CD4-positive, alpha-beta T cell (primary cell): ENCODE measurements at regions of chr17 and their contacts with region 1.

Region 1: DNA sequence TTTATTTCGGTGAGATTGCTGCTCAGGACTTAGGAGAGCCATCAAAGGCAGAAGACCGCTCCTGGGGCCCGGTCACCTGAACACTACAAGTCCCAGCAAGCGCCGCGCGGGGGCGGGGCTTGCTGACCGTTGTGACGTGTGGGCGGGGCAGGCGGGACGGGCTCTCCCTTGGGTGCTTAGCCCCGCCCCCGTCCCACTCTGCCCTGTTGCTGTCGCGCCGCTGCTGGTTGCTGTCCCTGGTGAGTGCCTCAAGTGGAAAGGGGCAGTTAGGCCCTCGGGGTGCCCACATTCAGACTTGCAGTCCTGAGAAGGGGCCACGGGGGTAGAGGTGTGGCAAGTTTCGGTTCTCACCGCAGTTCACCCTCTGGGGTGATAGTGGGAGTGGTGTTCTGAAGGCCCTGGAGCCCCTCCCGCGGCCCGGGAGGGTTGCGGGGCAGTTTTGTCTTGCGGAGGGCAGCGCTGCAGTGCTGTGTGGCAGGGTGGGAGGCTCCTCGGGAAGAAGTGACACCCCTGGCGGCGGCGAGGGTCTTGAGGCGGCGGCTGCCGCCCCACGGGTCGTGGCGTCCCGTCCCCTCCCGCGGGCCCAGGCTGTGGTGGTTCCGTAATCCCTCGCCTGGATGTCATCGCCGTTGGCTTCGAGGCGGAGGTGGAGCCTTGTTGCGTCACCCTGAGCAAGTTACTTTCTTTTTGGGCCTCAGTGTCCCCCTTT is at the start of gene CALCOCO2:
- DNase-seq: peak; percentile 66 to 95 (median 84)
- ATAC-seq: peak; percentile 84
- H3K4me3 ChIP-seq: peak within 1 kb of the TSS; percentile 98
- H3K4me3 Mint-ChIP-seq: peak within 1 kb of the TSS; percentile 99
- H3K27ac ChIP-seq: peak within 1 kb of the TSS; percentile 90 to 96
- H3K27ac Mint-ChIP-seq: peak within 1 kb of the TSS; percentile 97
- H3K4me1 ChIP-seq: peaks cover 45% of the 10 kb centered on the region
- H3K4me1 Mint-ChIP-seq: peaks cover 51% of the 10 kb centered on the region
- H3K27me3 ChIP-seq: no peaks in the 10 kb centered on the region
- H3K27me3 Mint-ChIP-seq: peaks cover under 1% of the 10 kb centered on the region
- CTCF ChIP-seq: no peak
- total RNA-seq, gene CALCOCO2: 140 to 142 TPM

Region 2: GRCh38 chr17:48787828-48788227 is 43.2 kb before region 1 on chr17:
- CTCF ChIA-PET with region 1: no interaction called
- POLR2A ChIA-PET with region 1: no interaction called
- intact Hi-C with region 1: no loop called
- DNase-seq: no peak
- ATAC-seq: no peak
- H3K4me3 ChIP-seq: no peak overlapping the region
- H3K4me3 Mint-ChIP-seq: no peak overlapping the region
- H3K27ac ChIP-seq: no peak overlapping the region
- H3K27ac Mint-ChIP-seq: no peak overlapping the region
- H3K4me1 ChIP-seq: peaks cover 6% of the 10 kb centered on the region
- H3K4me1 Mint-ChIP-seq: no peaks in the 10 kb centered on the region
- H3K27me3 ChIP-seq: peaks cover 9 to 18% of the 10 kb centered on the region in 2 experiments
- H3K27me3 Mint-ChIP-seq: peaks cover 48% of the 10 kb centered on the region
- CTCF ChIP-seq: no peak

Region 3: GRCh38 chr17:48816774-48817590 is 14.0 kb before region 1 on chr17 and contains the start of gene TTLL6:
- CTCF ChIA-PET with region 1: interaction called, 5 read pairs
- POLR2A ChIA-PET with region 1: interaction called, 5 read pairs
- intact Hi-C with region 1: loop called in 1 of 2 experiments (anchors 1 kb)
- DNase-seq: peak; percentile 56 to 91 (median 78)
- ATAC-seq: peak; percentile 98
- H3K4me3 ChIP-seq: peak within 1 kb of the TSS; percentile 50
- H3K4me3 Mint-ChIP-seq: peak within 1 kb of the TSS; percentile 87
- H3K27ac ChIP-seq: no peak within 1 kb of the TSS
- H3K27ac Mint-ChIP-seq: no peak within 1 kb of the TSS
- H3K4me1 ChIP-seq: peaks cover 22% of the 10 kb centered on the region
- H3K4me1 Mint-ChIP-seq: peaks cover 22% of the 10 kb centered on the region
- H3K27me3 ChIP-seq: peaks cover 16 to 32% of the 10 kb centered on the region in 2 experiments
- H3K27me3 Mint-ChIP-seq: peaks cover 71% of the 10 kb centered on the region
- CTCF ChIP-seq: no peak
- total RNA-seq, gene TTLL6: not detected

Region 4: GRCh38 chr17:48841395-48841831 is 10.4 kb after region 1 on chr17:
- CTCF ChIA-PET with region 1: interaction called, 3 read pairs
- POLR2A ChIA-PET with region 1: interaction called, 10 read pairs
- intact Hi-C with region 1: loop called in 1 of 2 experiments (anchors 1 kb)
- DNase-seq: peak in 4 of 14 experiments; percentile 20 to 86 (median 72)
- ATAC-seq: peak; percentile 84
- H3K4me3 ChIP-seq: peak overlapping the region; percentile 46
- H3K4me3 Mint-ChIP-seq: peak overlapping the region; percentile 79
- H3K27ac ChIP-seq: peak overlapping the region; percentile 44 to 80
- H3K27ac Mint-ChIP-seq: peak overlapping the region; percentile 91
- H3K4me1 ChIP-seq: peaks cover 50% of the 10 kb centered on the region
- H3K4me1 Mint-ChIP-seq: peaks cover 51% of the 10 kb centered on the region
- H3K27me3 ChIP-seq: no peaks in the 10 kb centered on the region
- H3K27me3 Mint-ChIP-seq: no peaks in the 10 kb centered on the region
- CTCF ChIP-seq: no peak

Region 5: DNA sequence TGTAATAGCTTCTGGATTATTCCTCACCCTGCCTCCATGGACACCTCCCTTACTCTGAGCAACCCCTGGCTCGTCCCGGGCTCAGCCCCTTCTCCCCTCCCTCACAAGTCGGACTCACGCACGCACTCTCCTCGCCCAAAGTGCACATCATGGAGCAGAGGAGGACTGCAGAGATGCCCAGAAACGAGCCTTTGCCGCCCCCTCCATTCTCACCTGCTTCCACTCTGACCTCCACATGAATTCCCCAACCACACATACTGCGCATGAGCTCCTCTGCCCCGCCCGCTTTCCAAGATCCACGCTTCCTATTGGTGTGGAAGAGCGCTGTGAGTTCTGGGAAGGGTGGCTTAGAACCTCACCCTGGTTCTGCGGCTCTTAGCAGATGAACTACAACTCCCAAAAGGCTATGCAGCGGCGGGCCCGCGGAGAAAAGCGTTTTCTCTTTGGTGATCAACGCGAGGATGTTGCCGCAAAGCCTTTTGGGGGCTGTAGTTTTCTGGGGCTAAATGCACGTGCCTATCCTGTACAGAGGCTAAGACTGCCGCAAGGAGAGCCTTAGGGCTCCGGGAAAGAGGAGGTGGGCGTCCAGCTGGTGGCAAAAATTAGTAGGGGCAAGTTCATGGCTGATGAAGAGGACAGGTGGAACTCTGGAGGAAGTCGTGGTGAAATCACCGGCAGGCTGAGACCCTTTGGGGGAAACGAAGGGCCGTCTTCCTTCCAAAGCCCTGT is 583.8 kb after region 1 on chr17 and contains the start of gene PHB1:
- CTCF ChIA-PET with region 1: no interaction called
- POLR2A ChIA-PET with region 1: no interaction called
- intact Hi-C with region 1: loop called in 1 of 2 experiments (anchors 10 kb)
- DNase-seq: peak; percentile 88 to 99 (median 92)
- ATAC-seq: peak; percentile 98
- H3K4me3 ChIP-seq: peak within 1 kb of the TSS; percentile 87
- H3K4me3 Mint-ChIP-seq: peak within 1 kb of the TSS; percentile 91
- H3K27ac ChIP-seq: peak within 1 kb of the TSS in 1 of 2 donors; percentile 30
- H3K27ac Mint-ChIP-seq: peak within 1 kb of the TSS; percentile 52
- H3K4me1 ChIP-seq: peaks cover 19% of the 10 kb centered on the region
- H3K4me1 Mint-ChIP-seq: peaks cover 16% of the 10 kb centered on the region
- H3K27me3 ChIP-seq: no peaks in the 10 kb centered on the region
- H3K27me3 Mint-ChIP-seq: no peaks in the 10 kb centered on the region
- CTCF ChIP-seq: no peak
- total RNA-seq, gene PHB1: 24.2 to 31.6 TPM